ENCODE measurements at regions of chr14 and their contacts with region 1.

Region 1: GRCh38 chr14:93115069-93115820 is 480 bp downstream of the ITPK1 start:
- DNase-seq: peak; percentile 70 to 94 (median 80)
- ATAC-seq: peak; percentile 89
- H3K4me3 ChIP-seq: peak overlapping the region; percentile 61
- H3K4me3 Mint-ChIP-seq: peak overlapping the region; percentile 67 to 91 (median 84)
- H3K27ac ChIP-seq: peak overlapping the region; percentile 68
- H3K27ac Mint-ChIP-seq: peak overlapping the region in 3 of 9 donors; percentile 29 to 97 (median 69)
- H3K4me1 ChIP-seq: peaks cover 17 to 22% of the 10 kb centered on the region in 2 donors
- H3K4me1 Mint-ChIP-seq: peaks cover 20 to 32% (median 26%) of the 10 kb centered on the region in 7 donors
- H3K27me3 ChIP-seq: no peaks in the 10 kb centered on the region
- H3K27me3 Mint-ChIP-seq: no peaks in the 10 kb centered on the region

Region 2: DNA sequence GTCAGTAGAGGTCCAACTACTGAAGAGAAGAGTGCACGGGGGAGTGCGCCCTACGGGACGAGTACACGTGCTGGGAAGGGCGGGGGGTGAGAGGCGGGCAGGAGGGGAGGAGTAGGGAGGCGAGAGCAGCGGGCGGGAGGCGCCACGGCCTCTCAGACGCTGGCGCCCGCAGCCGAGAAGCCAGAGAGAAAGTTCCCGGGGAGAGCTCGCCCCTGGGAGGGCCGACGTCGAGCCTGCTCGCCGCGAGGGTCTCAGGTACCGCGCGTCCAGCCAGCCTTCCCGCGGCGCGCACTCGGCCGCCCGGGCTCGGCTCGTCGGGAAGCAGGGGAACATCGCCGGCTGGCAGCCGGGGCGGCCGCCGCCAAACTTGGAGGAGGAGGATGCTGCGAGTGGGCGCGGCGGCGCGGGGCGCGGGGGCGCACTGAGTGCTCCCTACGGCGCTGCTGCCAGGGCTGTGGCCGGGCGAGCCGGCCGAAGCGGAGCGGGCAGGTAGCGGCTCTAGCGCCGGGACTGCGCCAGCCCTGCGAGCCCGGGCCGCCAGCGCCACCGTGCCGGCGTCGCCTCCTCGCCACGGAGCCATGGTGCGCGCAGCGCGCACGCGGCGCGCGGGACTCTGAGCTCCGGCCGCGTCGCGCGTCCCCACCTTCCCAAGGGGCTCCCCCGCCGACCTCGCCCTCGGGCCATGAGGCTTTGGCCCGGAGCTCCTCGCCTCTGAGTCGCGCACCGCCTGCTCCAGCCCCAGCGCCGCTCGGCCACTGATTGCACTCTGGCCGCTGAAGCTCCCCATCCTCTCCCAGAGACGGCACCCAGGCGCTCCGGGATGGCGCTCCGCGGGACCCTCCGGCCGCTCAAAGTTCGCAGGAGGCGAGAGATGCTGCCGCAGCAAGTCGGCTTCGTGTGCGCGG is 792.0 kb before region 1 on chr14 and contains the start of gene SLC24A4:
- CTCF ChIA-PET with region 1: no interaction called
- POLR2A ChIA-PET with region 1: no interaction called
- intact Hi-C with region 1: no loop called
- DNase-seq: peak in 3 of 9 donors; percentile 3 to 30 (median 12)
- ATAC-seq: no peak
- H3K4me3 ChIP-seq: no peak within 1 kb of the TSS
- H3K4me3 Mint-ChIP-seq: peak within 1 kb of the TSS; percentile 53 to 82 (median 70)
- H3K27ac ChIP-seq: no peak within 1 kb of the TSS
- H3K27ac Mint-ChIP-seq: no peak within 1 kb of the TSS
- H3K4me1 ChIP-seq: no peaks in the 10 kb centered on the region
- H3K4me1 Mint-ChIP-seq: peaks cover 0 to 7% (median 3%) of the 10 kb centered on the region in 7 donors
- H3K27me3 ChIP-seq: no peaks in the 10 kb centered on the region
- H3K27me3 Mint-ChIP-seq: peaks cover 53 to 83% (median 67%) of the 10 kb centered on the region in 5 donors
- total RNA-seq, gene SLC24A4: 0.10 to 15.3 (median 2.1) TPM in 3 of 5 experiments, not detected in the others

Region 3: DNA sequence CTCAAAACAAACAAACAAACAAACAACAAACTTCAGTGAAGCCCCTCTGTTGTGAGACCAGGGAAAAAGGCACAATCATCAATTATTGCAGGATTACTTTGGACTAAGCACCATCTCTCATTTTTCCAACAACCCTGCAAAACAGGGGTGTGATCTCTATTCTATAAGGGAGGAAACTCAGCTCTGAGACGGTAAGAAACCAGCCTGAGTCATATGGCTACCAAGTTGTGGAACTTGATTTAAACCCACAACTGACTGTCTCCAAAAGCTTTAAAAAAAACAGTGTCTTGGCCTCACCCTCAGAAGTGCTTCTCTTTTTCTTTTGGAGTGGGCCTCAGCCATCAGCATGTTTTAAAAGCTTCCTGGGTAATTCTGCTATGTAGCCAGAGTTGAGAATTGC is 551.9 kb before region 1 on chr14:
- CTCF ChIA-PET with region 1: no interaction called
- POLR2A ChIA-PET with region 1: no interaction called
- intact Hi-C with region 1: loop called in 1 of 2 experiments (anchors 5 kb)
- DNase-seq: no peak
- ATAC-seq: peak; percentile 66
- H3K4me3 ChIP-seq: no peak overlapping the region
- H3K4me3 Mint-ChIP-seq: peak overlapping the region in 1 of 10 donors; percentile 10
- H3K27ac ChIP-seq: no peak overlapping the region
- H3K27ac Mint-ChIP-seq: peak overlapping the region in 2 of 9 donors; percentile 21 to 68
- H3K4me1 ChIP-seq: peaks cover 5 to 9% of the 10 kb centered on the region in 2 donors
- H3K4me1 Mint-ChIP-seq: peaks cover 15 to 64% (median 38%) of the 10 kb centered on the region in 7 donors
- H3K27me3 ChIP-seq: no peaks in the 10 kb centered on the region
- H3K27me3 Mint-ChIP-seq: no peaks in the 10 kb centered on the region

Region 4: GRCh38 chr14:92914087-92914656 is 201.1 kb before region 1 on chr14:
- CTCF ChIA-PET with region 1: no interaction called
- POLR2A ChIA-PET with region 1: no interaction called
- intact Hi-C with region 1: no loop called
- DNase-seq: peak in 4 of 9 donors; percentile 18 to 58 (median 24)
- ATAC-seq: no peak
- H3K4me3 ChIP-seq: no peak overlapping the region
- H3K4me3 Mint-ChIP-seq: no peak overlapping the region
- H3K27ac ChIP-seq: no peak overlapping the region
- H3K27ac Mint-ChIP-seq: no peak overlapping the region
- H3K4me1 ChIP-seq: no peaks in the 10 kb centered on the region
- H3K4me1 Mint-ChIP-seq: no peaks in the 10 kb centered on the region
- H3K27me3 ChIP-seq: no peaks in the 10 kb centered on the region
- H3K27me3 Mint-ChIP-seq: peaks cover 0 to 16% (median 10%) of the 10 kb centered on the region in 5 donors

Region 5: DNA sequence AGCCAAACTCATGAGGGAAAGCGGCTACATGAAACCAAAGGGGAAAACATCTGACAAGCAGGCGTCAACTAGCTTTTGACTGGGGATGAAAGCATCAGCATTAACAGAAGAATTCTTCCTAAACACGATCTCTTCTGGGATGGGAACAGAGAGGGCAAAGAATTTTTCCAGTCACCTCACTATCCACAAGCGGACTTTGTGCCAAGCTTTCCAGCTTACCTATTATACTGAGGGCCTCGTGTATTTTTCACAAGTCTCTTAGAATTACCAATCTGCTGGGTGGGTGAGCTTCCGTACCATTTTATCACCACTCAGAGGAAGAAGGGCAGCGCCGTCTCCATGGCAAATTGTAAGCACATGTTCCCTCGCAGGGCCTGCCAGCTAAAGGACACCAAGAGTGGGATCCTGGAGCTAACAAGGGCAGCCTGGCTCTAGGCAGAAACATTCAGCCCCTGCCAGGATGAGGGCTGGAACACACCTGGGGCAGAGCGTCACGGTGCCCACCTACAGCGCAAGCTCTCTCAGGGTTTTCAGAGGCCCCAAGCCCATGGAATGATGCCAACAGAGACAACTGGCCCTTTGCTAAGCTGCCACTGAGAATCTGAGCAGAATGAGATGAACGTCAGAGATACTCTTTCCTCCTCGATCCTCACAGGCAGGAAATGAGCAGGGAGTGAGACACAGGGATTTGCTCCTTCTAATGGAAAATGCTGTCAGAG is 117.7 kb before region 1 on chr14:
- CTCF ChIA-PET with region 1: no interaction called
- POLR2A ChIA-PET with region 1: no interaction called
- intact Hi-C with region 1: no loop called
- DNase-seq: no peak
- ATAC-seq: no peak
- H3K4me3 ChIP-seq: no peak overlapping the region
- H3K4me3 Mint-ChIP-seq: no peak overlapping the region
- H3K27ac ChIP-seq: no peak overlapping the region
- H3K27ac Mint-ChIP-seq: no peak overlapping the region
- H3K4me1 ChIP-seq: no peaks in the 10 kb centered on the region
- H3K4me1 Mint-ChIP-seq: no peaks in the 10 kb centered on the region
- H3K27me3 ChIP-seq: no peaks in the 10 kb centered on the region
- H3K27me3 Mint-ChIP-seq: no peaks in the 10 kb centered on the region

Region 6: DNA sequence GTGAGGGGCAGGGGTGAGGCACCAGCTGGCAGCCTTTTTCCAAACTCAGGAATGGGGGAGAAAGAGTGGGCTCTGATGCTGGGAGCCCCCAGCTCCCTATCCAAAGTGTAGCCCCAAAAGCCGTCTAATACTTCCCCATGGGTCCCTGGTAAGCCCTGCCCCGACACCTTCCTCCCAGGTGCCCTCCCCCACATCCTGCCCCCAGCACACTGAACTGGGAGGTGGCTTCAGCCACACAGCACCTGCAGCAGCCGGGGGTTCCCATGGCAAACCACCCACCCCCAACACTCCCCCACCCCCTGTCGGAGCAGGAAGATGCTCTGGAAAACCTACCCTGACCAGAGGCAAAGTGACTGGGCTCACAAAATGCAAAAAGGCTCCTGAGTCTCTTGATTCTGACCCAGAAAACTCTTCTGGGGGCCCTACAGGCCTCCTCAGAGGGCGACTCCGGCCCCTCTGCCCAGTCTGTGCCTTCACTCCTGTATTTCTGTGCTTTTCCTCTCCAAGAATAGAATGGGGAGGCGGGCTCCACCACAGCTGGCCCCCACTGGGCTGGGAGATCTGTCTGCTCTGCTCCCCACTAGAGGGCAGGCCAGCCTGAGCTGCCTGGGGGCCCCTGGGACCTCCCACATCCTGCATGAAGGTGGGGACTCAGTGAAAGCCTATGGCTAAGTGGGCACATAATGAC is 81.1 kb before region 1 on chr14:
- CTCF ChIA-PET with region 1: no interaction called
- POLR2A ChIA-PET with region 1: no interaction called
- intact Hi-C with region 1: loop called (anchors 2 kb)
- DNase-seq: peak in 7 of 9 donors; percentile 15 to 31 (median 29)
- ATAC-seq: peak; percentile 71
- H3K4me3 ChIP-seq: no peak overlapping the region
- H3K4me3 Mint-ChIP-seq: peak overlapping the region; percentile 17 to 79 (median 51)
- H3K27ac ChIP-seq: no peak overlapping the region
- H3K27ac Mint-ChIP-seq: peak overlapping the region in 8 of 9 donors; percentile 65 to 91 (median 72)
- H3K4me1 ChIP-seq: peaks cover 13 to 17% of the 10 kb centered on the region in 2 donors
- H3K4me1 Mint-ChIP-seq: peaks cover 21 to 34% (median 26%) of the 10 kb centered on the region in 7 donors
- H3K27me3 ChIP-seq: no peaks in the 10 kb centered on the region
- H3K27me3 Mint-ChIP-seq: no peaks in the 10 kb centered on the region

Region 7: DNA sequence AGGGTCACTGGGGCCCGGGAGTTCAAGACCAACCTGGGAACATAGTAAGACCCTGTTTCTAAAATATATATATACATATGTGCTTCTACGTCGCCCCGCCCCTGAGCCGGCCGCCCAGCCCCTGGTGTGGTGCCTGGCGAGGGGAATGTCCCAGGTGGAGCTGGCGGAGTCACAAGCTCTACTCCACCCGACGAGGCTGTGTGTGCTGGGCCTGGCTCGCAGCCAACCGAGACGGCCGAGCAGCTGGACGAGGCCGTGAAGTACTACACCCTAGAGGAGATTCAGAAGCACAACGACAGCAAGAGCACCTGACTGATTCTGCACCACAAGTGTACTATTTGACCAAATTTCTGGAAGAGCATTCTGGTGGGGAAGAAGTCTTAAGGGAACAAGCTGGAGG is 22.6 kb after region 1 on chr14:
- CTCF ChIA-PET with region 1: interaction called, 108 read pairs
- POLR2A ChIA-PET with region 1: interaction called, 5 read pairs
- intact Hi-C with region 1: loop called (anchors 1 kb)
- DNase-seq: no peak
- ATAC-seq: no peak
- H3K4me3 ChIP-seq: no peak overlapping the region
- H3K4me3 Mint-ChIP-seq: no peak overlapping the region
- H3K27ac ChIP-seq: no peak overlapping the region
- H3K27ac Mint-ChIP-seq: no peak overlapping the region
- H3K4me1 ChIP-seq: no peaks in the 10 kb centered on the region
- H3K4me1 Mint-ChIP-seq: peaks cover 2 to 6% (median 4%) of the 10 kb centered on the region in 7 donors
- H3K27me3 ChIP-seq: no peaks in the 10 kb centered on the region
- H3K27me3 Mint-ChIP-seq: no peaks in the 10 kb centered on the region

Region 8: DNA sequence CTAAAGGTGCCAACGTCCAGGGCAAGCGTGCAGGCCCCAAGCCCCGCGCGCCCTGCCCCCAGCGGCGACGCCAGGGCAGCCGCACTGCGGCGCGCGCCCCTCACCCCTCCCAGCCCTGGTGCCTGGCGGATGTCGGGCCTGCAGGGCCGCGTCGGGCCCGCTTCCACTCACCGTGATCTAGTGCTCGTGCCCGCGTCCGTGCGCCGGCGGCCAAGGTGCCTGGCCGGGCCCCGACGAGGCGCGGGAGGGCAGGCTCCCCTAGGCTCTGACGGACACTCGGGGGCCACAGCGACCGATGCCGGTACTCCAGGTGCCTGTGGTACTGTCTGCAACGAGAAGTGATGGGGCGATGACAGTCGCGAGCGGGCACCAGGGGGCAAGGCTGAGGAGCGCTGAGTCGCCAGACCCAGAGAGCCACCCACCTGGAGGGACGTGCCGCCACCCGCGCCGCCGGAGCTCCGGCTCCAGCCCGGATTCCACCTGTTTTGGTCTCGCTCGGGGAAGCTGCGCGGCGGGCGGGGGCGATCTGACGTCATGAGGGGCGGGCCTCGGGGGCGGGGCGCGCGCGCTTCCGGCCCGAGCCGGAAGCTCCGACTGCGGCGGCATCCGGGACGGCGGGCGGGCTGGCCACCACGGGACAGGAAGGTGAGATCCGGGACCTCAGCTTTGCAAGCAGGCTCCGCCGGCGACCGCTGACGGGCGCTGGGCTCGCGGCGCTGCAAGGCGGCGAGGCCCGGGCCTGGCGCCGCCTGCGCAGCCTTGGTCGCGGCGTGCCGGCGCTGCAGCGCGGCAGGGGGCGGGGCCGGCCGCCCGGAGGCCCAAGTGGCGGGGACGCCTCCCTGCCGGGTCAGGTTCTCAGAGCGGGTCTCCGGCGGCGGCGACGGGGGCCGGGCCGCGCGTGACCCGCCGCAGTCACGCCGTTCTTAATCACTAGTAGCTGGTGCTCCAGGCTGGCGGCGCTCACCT is 69.4 kb after region 1 on chr14 and contains the starts of genes LYSET and MOAP1:
- CTCF ChIA-PET with region 1: interaction called, 24 read pairs
- POLR2A ChIA-PET with region 1: interaction called, 19 read pairs
- intact Hi-C with region 1: loop called (anchors 1 kb)
- DNase-seq: peak; percentile 78 to 91 (median 89)
- ATAC-seq: peak; percentile 90
- H3K4me3 ChIP-seq: peak within 1 kb of the TSS; percentile 95
- H3K4me3 Mint-ChIP-seq: peak within 1 kb of the TSS; percentile 90 to 98 (median 96)
- H3K27ac ChIP-seq: peak within 1 kb of the TSS; percentile 96
- H3K27ac Mint-ChIP-seq: peak within 1 kb of the TSS; percentile 91 to 98 (median 96)
- H3K4me1 ChIP-seq: peaks cover 9 to 23% of the 10 kb centered on the region in 2 donors
- H3K4me1 Mint-ChIP-seq: peaks cover 24 to 60% (median 42%) of the 10 kb centered on the region in 7 donors
- H3K27me3 ChIP-seq: no peaks in the 10 kb centered on the region
- H3K27me3 Mint-ChIP-seq: no peaks in the 10 kb centered on the region
- total RNA-seq, gene LYSET: 8.0 to 26.6 (median 12.4) TPM
- total RNA-seq, gene MOAP1: 20.5 to 102 (median 43.6) TPM

Region 9: DNA sequence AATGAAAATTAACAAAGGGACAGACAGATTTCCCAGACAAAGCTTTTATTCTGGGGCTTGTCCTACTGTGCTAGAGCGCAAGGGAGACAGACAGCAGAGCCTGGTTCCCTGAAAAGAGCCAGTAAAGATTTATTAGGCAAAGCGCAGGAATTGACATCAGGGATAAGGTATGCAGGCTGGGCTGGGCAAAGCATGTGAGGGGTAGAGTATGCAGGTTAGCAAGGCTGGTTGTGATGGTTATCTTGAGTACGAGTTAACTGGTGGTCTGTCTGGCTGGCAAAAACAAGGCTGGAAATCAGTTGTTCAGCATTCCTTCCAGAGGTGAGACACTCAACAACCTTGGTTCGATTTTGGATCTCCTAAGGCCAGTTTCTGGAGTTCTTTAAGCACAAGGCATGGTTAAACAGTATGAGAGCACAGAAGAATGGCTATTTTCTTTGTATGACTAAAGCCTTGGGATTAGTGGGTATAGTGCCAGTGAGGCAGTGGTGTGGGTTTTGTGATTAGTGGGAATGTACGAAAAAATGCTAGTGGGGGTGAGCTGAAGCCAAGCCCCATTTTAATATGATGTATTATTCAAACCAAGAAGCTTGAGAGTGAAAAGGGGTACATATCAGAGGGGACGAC is 186.7 kb after region 1 on chr14:
- CTCF ChIA-PET with region 1: no interaction called
- POLR2A ChIA-PET with region 1: no interaction called
- intact Hi-C with region 1: no loop called
- DNase-seq: no peak
- ATAC-seq: no peak
- H3K4me3 ChIP-seq: no peak overlapping the region
- H3K4me3 Mint-ChIP-seq: no peak overlapping the region
- H3K27ac ChIP-seq: no peak overlapping the region
- H3K27ac Mint-ChIP-seq: no peak overlapping the region
- H3K4me1 ChIP-seq: no peaks in the 10 kb centered on the region
- H3K4me1 Mint-ChIP-seq: peaks cover 5 to 64% (median 47%) of the 10 kb centered on the region in 7 donors
- H3K27me3 ChIP-seq: no peaks in the 10 kb centered on the region
- H3K27me3 Mint-ChIP-seq: no peaks in the 10 kb centered on the region

Region 10: GRCh38 chr14:93332853-93333630 is 217.8 kb after region 1 on chr14 and contains the start of gene BTBD7:
- CTCF ChIA-PET with region 1: no interaction called
- POLR2A ChIA-PET with region 1: no interaction called
- intact Hi-C with region 1: loop called (anchors 1 kb)
- DNase-seq: peak; percentile 91 to 95 (median 93)
- ATAC-seq: peak; percentile 96
- H3K4me3 ChIP-seq: peak within 1 kb of the TSS; percentile 86
- H3K4me3 Mint-ChIP-seq: peak within 1 kb of the TSS; percentile 90 to 96 (median 92)
- H3K27ac ChIP-seq: peak within 1 kb of the TSS; percentile 90
- H3K27ac Mint-ChIP-seq: peak within 1 kb of the TSS; percentile 87 to 98 (median 93)
- H3K4me1 ChIP-seq: peaks cover 19 to 21% of the 10 kb centered on the region in 2 donors
- H3K4me1 Mint-ChIP-seq: peaks cover 34 to 64% (median 54%) of the 10 kb centered on the region in 7 donors
- H3K27me3 ChIP-seq: no peaks in the 10 kb centered on the region
- H3K27me3 Mint-ChIP-seq: no peaks in the 10 kb centered on the region
- total RNA-seq, gene BTBD7: 18.5 to 31.7 (median 27.5) TPM

Region 11: DNA sequence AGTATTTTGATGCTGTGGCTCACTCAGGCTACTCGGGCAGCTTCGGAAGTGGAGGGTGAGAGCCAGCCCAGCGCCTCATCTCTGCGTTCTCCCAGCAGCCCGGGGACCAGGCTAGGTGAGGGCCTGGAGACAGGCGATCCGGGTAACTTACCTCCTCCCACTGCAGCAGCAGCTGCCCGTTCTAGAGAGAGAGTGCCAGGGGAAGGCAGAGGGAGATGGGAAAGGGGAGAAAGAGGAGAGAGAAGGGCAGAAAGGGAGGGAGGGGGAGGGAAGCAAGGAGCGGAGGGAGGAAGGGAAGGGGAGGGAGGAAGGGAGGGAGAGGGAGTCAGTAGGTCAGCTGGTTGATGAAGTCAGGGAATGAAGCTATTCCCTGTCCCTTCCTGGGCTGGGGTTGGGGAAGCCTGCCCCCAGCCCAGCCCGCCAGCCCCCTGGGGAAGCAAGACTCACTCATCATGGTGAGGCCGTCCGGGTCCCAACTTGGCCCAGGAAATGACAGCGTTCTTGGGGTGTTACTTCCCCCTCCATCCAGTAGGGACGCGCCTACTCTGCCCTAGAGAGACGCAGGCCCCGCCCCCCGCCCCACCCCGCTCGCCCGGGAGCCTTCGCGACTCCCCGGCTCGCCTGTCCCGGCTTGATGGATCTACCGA is 1014.0 kb after region 1 on chr14 and contains the start of gene IFI27L2:
- CTCF ChIA-PET with region 1: no interaction called
- POLR2A ChIA-PET with region 1: interaction called, 3 read pairs
- intact Hi-C with region 1: loop called in 1 of 2 experiments (anchors 5 kb)
- DNase-seq: peak in 8 of 9 donors; percentile 26 to 69 (median 40)
- ATAC-seq: peak; percentile 95
- H3K4me3 ChIP-seq: peak within 1 kb of the TSS; percentile 84
- H3K4me3 Mint-ChIP-seq: peak within 1 kb of the TSS; percentile 71 to 97 (median 87)
- H3K27ac ChIP-seq: peak within 1 kb of the TSS; percentile 65
- H3K27ac Mint-ChIP-seq: peak within 1 kb of the TSS; percentile 41 to 92 (median 72)
- H3K4me1 ChIP-seq: peaks cover 12 to 21% of the 10 kb centered on the region in 2 donors
- H3K4me1 Mint-ChIP-seq: peaks cover 16 to 24% (median 18%) of the 10 kb centered on the region in 7 donors
- H3K27me3 ChIP-seq: no peaks in the 10 kb centered on the region
- H3K27me3 Mint-ChIP-seq: peaks cover 0 to 22% (median 0%) of the 10 kb centered on the region in 5 donors
- total RNA-seq, gene IFI27L2: 17.2 to 65.8 (median 26.5) TPM